ENCODE measurements at regions of chr19 and their contacts with region 1.

Region 1: DNA sequence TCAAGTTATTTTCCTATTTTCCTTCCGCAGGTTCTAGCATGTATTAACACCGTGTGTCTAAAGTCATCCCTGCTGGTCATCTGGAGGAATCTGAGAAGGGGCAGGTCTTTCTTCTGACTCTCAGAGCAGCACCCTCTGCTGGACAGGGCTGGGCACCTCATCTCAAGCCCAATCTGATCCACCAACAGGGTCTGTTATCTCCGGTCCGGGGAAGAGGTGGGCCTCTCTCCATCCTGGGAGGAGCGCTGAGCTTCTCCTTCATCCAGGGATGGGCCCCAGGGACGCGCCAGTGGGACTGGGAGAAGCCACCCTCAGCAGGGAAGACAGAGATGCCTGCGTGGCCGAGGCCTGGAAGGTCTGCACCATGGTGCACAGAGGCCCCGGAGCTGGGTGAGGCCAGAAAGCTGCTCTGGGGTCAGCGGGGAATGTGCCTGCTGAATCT is 26.0 kb upstream of the ZNF331 start:
- DNase-seq: peak in 2 of 4 donors; percentile 45 to 58
- ATAC-seq: peak; percentile 95
- H3K4me3 ChIP-seq: no peak overlapping the region
- H3K27ac ChIP-seq: no peak overlapping the region
- H3K4me1 ChIP-seq: no peaks in the 10 kb centered on the region
- H3K27me3 ChIP-seq: peaks cover 0 to 7% of the 10 kb centered on the region in 2 donors
- CTCF ChIP-seq: peak; percentile 51 to 71

Region 2: DNA sequence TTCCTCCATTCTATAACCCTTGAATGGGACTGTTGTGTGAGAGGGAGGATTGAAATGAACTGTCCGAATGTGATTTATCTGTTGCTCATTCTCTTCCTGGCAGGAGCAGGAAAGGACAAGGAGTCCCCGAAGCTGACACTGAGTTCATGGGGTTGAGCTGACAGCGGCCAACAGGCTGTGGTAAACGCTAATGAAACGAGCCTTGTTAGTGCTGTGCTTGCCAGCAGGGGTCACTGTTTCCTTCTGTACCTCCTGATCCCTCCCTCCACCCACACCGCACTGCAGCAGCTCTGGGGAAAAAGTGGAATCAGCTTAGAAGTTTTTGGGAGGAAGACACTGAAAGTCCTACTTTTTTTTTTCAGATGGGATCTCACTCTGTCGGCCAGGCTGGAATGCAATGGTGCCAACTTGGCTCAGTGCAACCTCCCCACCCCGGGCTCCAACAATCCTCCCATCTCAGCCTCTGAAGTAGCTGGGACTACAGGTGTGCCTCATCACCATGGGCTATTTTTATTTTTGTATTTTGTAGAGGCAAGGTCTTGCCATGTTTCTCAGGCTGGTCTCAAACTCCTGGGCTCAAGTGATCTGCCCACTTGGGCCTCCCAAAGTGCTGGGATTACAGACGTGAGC is 86.9 kb before region 1 on chr19:
- intact Hi-C with region 1: loop called in 1 of 2 experiments (anchors 10 kb)
- DNase-seq: peak; percentile 65 to 85 (median 75)
- ATAC-seq: peak; percentile 99
- H3K4me3 ChIP-seq: no peak overlapping the region
- H3K27ac ChIP-seq: no peak overlapping the region
- H3K4me1 ChIP-seq: peaks cover 0 to 7% of the 10 kb centered on the region in 2 donors
- H3K27me3 ChIP-seq: no peaks in the 10 kb centered on the region
- CTCF ChIP-seq: peak; percentile 79 to 82

Region 3: DNA sequence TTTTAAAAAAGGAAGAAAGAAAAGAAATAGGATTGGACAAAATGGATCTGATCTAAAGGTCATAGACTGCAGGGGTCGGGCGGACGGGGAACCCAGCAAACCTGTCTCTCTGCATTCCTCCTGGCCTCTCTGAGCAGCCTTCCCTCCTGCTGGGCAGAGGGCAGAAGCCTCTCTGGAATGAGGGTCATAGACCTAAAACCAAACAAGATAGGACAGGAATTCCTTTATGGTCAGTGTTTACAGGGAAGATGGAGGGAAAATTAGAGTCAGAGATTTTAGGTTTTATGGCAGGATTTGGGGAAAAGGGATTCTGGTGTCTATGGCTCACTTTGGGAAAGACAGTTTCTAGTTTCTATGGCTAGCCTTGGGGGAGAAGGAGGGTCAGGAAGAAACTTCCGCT is 100.8 kb after region 1 on chr19:
- intact Hi-C with region 1: no loop called
- DNase-seq: no peak
- ATAC-seq: no peak
- H3K4me3 ChIP-seq: no peak overlapping the region
- H3K27ac ChIP-seq: no peak overlapping the region
- H3K4me1 ChIP-seq: no peaks in the 10 kb centered on the region
- H3K27me3 ChIP-seq: no peaks in the 10 kb centered on the region
- CTCF ChIP-seq: no peak

Measured in left lung (tissue), 14 donors.